Dorsolateral prefrontal cortex (tissue), 120 donors: ENCODE measurements at regions of chr17 and their contacts with region 1.

Region 1: GRCh38 chr17:45894022-45894784 is at the start of gene MAPT:
- DNase-seq: peak; percentile 87 to 98 (median 92)
- H3K4me3 ChIP-seq: peak within 1 kb of the TSS; percentile 64 to 99 (median 95)
- H3K27ac ChIP-seq: peak within 1 kb of the TSS; percentile 78 to 100 (median 97)
- H3K27me3 ChIP-seq: peaks cover 0 to 5% (median 0%) of the 10 kb centered on the region in 45 donors
- CTCF ChIP-seq: peak; percentile 68 to 100 (median 94)
- total RNA-seq, gene MAPT: 323 to 524 (median 437) TPM

Region 2: DNA sequence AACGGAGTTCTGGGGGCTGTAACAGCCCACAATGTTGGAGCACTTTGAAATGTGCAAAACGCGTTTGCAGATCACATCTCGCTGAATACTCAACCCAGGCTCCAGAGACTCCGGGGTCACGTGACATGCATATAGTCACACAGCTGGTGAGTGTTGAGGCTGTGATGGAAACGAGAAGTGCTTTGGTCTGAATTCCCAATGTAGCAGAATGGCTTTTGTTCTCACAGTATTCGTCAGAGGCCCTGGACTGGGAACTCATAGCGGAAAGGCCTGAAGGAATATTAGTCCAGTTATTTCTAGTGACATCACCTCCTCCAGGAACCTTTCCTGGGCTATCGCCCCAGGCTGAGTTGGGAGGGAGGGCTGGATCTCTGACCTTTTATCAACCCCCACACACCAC is 205.8 kb before region 1 on chr17:
- intact Hi-C with region 1: no loop called
- DNase-seq: peak in 5 of 10 donors; percentile 22 to 63 (median 43)
- H3K4me3 ChIP-seq: no peak overlapping the region
- H3K27ac ChIP-seq: peak overlapping the region in 1 of 59 donors; percentile 37
- H3K27me3 ChIP-seq: peaks cover 0 to 5% (median 0%) of the 10 kb centered on the region in 45 donors
- CTCF ChIP-seq: no peak

Region 3: GRCh38 chr17:45782889-45783592 is 111.2 kb before region 1 on chr17:
- intact Hi-C with region 1: loop called in 1 of 2 experiments (anchors 5 kb)
- DNase-seq: peak in 6 of 10 donors; percentile 25 to 79 (median 61)
- H3K4me3 ChIP-seq: peak overlapping the region; percentile 40 to 84 (median 70)
- H3K27ac ChIP-seq: peak overlapping the region in 55 of 59 donors; percentile 7 to 93 (median 71)
- H3K27me3 ChIP-seq: peaks cover 0 to 27% (median 0%) of the 10 kb centered on the region in 45 donors
- CTCF ChIP-seq: peak; percentile 43 to 86 (median 78)

Region 4: GRCh38 chr17:45852535-45853297 is 41.5 kb before region 1 on chr17:
- intact Hi-C with region 1: loop called in 1 of 2 experiments (anchors 2 kb)
- DNase-seq: peak; percentile 57 to 84 (median 67)
- H3K4me3 ChIP-seq: peak overlapping the region in 4 of 59 donors; percentile 2 to 15 (median 10)
- H3K27ac ChIP-seq: peak overlapping the region in 4 of 59 donors; percentile 19 to 55 (median 33)
- H3K27me3 ChIP-seq: no peaks in the 10 kb centered on the region
- CTCF ChIP-seq: peak; percentile 77 to 97 (median 90)

Region 5: GRCh38 chr17:45948881-45949624 is 54.9 kb after region 1 on chr17:
- intact Hi-C with region 1: loop called (anchors 1 to 2 kb)
- DNase-seq: peak; percentile 66 to 84 (median 76)
- H3K4me3 ChIP-seq: peak overlapping the region in 55 of 59 donors; percentile 0 to 55 (median 35)
- H3K27ac ChIP-seq: peak overlapping the region; percentile 44 to 99 (median 96)
- H3K27me3 ChIP-seq: no peaks in the 10 kb centered on the region
- CTCF ChIP-seq: peak; percentile 28 to 95 (median 86)

Region 6: GRCh38 chr17:46002311-46002972 is 108.2 kb after region 1 on chr17:
- intact Hi-C with region 1: loop called in 1 of 2 experiments (anchors 5 kb)
- DNase-seq: peak in 9 of 10 donors; percentile 49 to 85 (median 71)
- H3K4me3 ChIP-seq: peak overlapping the region in 1 of 59 donors; percentile 1
- H3K27ac ChIP-seq: peak overlapping the region in 53 of 59 donors; percentile 2 to 90 (median 69)
- H3K27me3 ChIP-seq: no peaks in the 10 kb centered on the region
- CTCF ChIP-seq: peak; percentile 92 to 100 (median 97)

Region 7: GRCh38 chr17:46212634-46213435 is 318.6 kb after region 1 on chr17:
- intact Hi-C with region 1: loop called in 1 of 2 experiments (anchors 5 kb)
- DNase-seq: peak in 4 of 10 donors; percentile 56 to 84 (median 66)
- H3K4me3 ChIP-seq: peak overlapping the region in 2 of 59 donors; percentile 5 to 7
- H3K27ac ChIP-seq: peak overlapping the region in 16 of 59 donors; percentile 0 to 57 (median 22)
- H3K27me3 ChIP-seq: no peaks in the 10 kb centered on the region
- CTCF ChIP-seq: peak in 55 of 56 donors; percentile 63 to 99 (median 90)